Panc1 (cell line): ENCODE measurements at regions of chr19 and their contacts with region 1.

Region 1: GRCh38 chr19:16247353-16248182 is 49.9 kb downstream of the AP1M1 start:
- DNase-seq: peak; percentile 52
- ATAC-seq: peak; percentile 99
- H3K4me3 ChIP-seq: no peak overlapping the region
- H3K27ac ChIP-seq: no peak overlapping the region
- H3K4me1 ChIP-seq: no peaks in the 10 kb centered on the region
- H3K27me3 ChIP-seq: no peaks in the 10 kb centered on the region
- CTCF ChIP-seq: peak; percentile 87

Region 2: GRCh38 chr19:16153582-16154336 is 93.8 kb before region 1 on chr19:
- CTCF ChIA-PET with region 1: no interaction called
- POLR2A ChIA-PET with region 1: no interaction called
- in situ Hi-C with region 1: no loop called
- intact Hi-C with region 1: no loop called
- DNase-seq: no peak
- ATAC-seq: no peak
- H3K4me3 ChIP-seq: no peak overlapping the region
- H3K27ac ChIP-seq: no peak overlapping the region
- H3K4me1 ChIP-seq: no peaks in the 10 kb centered on the region
- H3K27me3 ChIP-seq: no peaks in the 10 kb centered on the region
- CTCF ChIP-seq: no peak

Region 3: DNA sequence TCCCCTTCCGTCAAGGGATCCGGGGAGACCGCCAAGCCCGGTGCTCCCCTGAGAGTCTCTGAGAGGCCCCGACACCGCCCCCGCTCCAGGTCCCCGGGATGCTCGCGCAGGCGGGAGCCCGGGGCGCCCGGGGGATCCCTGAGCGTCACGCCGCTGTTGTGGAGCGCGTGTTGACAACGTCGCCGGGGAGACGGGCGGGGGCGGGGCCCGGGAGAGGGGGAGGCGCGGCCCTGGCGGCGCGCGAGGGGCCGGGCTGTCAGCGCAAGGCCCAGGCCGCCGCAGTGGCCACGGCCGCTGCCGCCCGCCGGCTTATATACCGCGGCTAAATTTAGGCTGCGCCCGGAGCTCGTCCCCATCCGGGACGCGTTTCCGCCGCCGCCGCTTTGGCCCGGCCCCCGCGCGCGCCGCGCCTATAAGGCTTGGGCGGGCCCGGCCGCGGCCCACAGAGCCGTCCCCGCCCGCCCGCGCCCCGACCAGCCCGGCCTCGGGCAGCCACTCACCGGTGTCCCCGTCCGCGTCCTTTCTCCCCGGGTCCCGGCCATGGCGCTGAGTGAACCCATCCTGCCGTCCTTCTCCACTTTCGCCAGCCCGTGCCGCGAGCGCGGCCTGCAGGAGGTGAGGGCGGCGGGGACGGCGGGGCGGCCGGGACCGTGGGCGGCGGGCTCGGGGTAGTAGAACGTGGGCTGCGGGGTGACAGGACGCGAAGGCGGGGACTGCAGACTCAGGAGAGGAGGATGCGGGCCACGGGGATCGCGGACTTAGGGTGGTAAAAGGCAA is 77.0 kb after region 1 on chr19 and contains the start of gene KLF2:
- CTCF ChIA-PET with region 1: interaction called, 3 read pairs
- POLR2A ChIA-PET with region 1: no interaction called
- in situ Hi-C with region 1: no loop called
- intact Hi-C with region 1: loop called (anchors 10 kb)
- DNase-seq: no peak
- ATAC-seq: peak; percentile 90
- H3K4me3 ChIP-seq: peak within 1 kb of the TSS; percentile 56 to 58
- H3K27ac ChIP-seq: 0 out of 2 replicates have a peak within 1 kb of the TSS, but pooled peaks have one; percentile 6
- H3K4me1 ChIP-seq: peaks cover 12% of the 10 kb centered on the region; the same call in 1 of the 2 replicates
- H3K27me3 ChIP-seq: no peaks in the 10 kb centered on the region
- CTCF ChIP-seq: no peak
- total RNA-seq, gene KLF2: 3.5 TPM

Region 4: DNA sequence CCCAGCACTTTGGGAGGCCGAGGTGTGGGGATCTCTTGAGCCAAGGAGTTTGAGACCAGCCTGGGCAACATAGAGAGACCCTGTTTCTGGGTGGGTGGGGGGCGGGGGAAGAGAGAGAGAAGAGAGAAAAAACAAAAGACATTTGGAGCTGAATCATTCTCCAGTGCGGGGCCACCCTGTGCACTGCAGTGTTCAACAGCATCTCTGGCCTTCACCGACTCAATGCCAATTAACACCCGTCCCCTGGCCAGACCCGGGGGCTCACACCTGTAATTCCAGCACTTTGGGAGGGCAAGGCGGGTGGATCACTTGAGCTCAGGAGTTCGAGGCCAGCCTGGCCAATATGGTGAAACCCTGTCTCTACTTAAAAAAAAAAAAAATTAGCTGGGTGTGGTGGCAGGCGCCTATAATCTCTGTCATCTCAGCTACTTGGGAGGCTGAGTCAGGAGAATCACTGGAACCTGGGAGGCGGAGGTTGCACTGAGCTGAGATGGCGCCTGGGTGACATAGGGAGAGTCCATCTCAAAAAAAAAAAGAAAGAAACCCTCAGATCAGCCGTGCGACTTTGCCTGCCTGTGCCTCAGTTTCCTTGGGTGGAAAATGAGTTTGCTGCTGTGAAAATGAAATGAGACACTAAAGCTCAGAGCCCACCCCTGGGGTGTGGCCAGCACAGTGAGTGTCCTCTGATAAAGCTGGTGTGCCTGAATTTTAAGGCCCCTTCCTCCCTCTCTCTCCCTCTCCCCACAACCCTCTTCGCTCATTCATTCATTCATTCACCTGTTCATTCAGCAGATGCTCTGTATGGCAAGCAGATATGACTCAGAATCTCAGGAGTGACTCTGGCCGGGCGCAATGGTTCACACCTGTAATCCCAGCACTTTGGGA is 83.5 kb after region 1 on chr19:
- CTCF ChIA-PET with region 1: interaction called, 10 read pairs
- POLR2A ChIA-PET with region 1: no interaction called
- in situ Hi-C with region 1: no loop called
- intact Hi-C with region 1: loop called (anchors 10 kb)
- DNase-seq: no peak
- ATAC-seq: peak; percentile 40
- H3K4me3 ChIP-seq: no peak overlapping the region
- H3K27ac ChIP-seq: no peak overlapping the region
- H3K4me1 ChIP-seq: peaks cover 13% of the 10 kb centered on the region; the same call in 1 of the 2 replicates
- H3K27me3 ChIP-seq: no peaks in the 10 kb centered on the region
- CTCF ChIP-seq: no peak

Region 5: DNA sequence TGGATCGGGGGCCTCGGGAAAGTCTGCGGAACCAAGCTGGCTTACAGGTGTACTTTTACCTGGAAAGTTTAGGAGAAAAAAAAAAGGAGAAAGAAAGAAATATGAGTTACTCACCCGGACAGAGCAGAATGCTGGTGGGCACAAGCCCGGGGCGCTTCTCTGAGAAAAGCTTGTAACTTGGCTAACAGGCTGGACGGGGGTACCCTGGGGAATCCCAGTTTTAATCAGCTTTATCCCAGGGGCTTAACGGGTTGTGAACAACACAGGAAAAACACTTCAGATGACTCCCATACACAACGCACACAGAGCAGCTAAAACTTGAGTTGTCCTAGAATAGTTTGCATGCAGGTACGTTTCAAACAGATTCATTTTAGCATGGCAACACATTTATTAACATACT is 114.4 kb after region 1 on chr19:
- CTCF ChIA-PET with region 1: no interaction called
- POLR2A ChIA-PET with region 1: interaction called, 12 read pairs
- in situ Hi-C with region 1: no loop called
- intact Hi-C with region 1: no loop called
- DNase-seq: no peak
- ATAC-seq: no peak
- H3K4me3 ChIP-seq: no peak overlapping the region
- H3K27ac ChIP-seq: no peak overlapping the region
- H3K4me1 ChIP-seq: no peaks in the 10 kb centered on the region
- H3K27me3 ChIP-seq: no peaks in the 10 kb centered on the region
- CTCF ChIP-seq: no peak

Region 6: DNA sequence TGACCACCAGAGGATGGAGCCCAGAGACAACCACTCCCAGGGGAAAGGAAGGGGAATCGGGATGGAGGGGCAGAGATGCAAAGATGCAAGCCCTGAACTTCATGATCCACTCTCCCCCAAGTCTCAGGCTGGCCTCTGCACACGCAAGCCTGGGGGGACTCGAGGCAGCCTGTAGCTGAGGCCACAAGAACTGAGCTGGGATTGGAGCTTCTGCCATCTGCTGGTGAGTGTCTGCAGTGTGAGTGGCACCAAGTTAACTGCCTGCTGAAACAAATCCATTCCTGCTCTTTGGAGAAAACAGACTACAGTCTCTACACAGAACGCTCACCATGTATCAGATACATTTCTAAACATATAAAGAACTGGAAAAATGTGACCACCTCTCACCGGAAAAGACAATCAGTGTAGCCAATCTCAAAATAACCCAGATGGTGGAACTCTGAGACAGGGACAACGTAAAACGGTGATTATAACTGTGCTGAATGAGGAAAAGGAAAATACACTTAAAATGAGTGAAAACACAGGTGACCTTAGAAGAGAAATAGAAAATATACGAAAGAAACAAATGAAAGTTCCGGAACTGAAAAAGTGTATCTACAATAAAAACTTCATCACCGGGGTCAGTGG is 139.2 kb after region 1 on chr19:
- CTCF ChIA-PET with region 1: interaction called, 4 read pairs
- POLR2A ChIA-PET with region 1: no interaction called
- in situ Hi-C with region 1: no loop called
- intact Hi-C with region 1: loop called (anchors 2 kb)
- DNase-seq: peak; percentile 27
- ATAC-seq: peak; percentile 80
- H3K4me3 ChIP-seq: no peak overlapping the region
- H3K27ac ChIP-seq: no peak overlapping the region
- H3K4me1 ChIP-seq: no peaks in the 10 kb centered on the region; the same call in 1 of the 2 replicates
- H3K27me3 ChIP-seq: no peaks in the 10 kb centered on the region
- CTCF ChIP-seq: peak; percentile 80